H1 (cell line): ENCODE measurements at regions of chr10 and their contacts with region 1.

Region 1: DNA sequence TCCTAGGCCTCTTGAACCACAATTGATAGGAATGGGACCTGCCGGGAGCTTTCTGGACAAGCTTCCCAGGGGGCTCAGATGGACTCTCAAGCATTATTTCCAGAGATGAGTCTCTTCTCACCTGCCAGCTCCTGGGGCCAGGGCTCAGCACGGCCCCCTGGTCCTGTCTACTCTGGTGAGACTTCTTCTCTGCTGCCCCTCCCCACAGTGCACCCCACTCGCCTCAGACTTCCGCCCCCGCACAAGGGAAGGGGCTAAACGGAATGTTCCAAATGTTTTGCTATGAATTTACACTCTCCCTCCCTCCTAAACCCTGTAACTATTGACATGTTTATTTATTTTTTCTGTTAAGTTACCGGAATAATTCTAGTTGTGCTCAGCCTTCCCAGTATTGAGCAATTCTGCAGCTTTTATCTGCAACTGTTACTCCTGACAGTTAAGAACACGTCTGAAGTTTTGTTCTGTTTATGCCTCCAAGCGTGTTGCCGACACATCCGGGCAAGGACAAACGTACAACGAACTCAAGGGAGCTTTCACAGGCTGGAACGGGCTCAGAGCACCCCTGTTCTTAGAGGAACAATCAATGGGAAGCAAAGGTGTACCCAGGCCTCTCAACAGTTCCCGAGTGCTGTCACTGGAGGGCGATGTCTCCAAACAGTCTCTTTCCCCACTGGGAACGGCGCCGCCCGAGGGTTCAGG is 55.2 kb downstream of the FHIP2A start:
- DNase-seq: peak; percentile 71 to 87
- H3K4me3 ChIP-seq: no peak overlapping the region
- H3K27ac ChIP-seq: no peak overlapping the region
- H3K4me1 ChIP-seq: peaks cover 4 to 14% (median 6%) of the 10 kb centered on the region in 4 experiments
- H3K27me3 ChIP-seq: no peaks in the 10 kb centered on the region
- CTCF ChIP-seq: peak; percentile 88 to 97 (median 95)
- EP300 ChIP-seq: 0 out of 3 replicates have a peak, but pooled peaks of 1 of the 2 experiments have one; percentile 9
- POLR2A ChIP-seq: no peak
- RAD21 ChIP-seq: peak; percentile 98

Region 2: GRCh38 chr10:114565066-114565465 is 311.7 kb before region 1 on chr10:
- CTCF ChIA-PET with region 1: no interaction called
- POLR2A ChIA-PET with region 1: no interaction called
- DNase-seq: no peak
- H3K4me3 ChIP-seq: no peak overlapping the region
- H3K27ac ChIP-seq: no peak overlapping the region
- H3K4me1 ChIP-seq: no peaks in the 10 kb centered on the region
- H3K27me3 ChIP-seq: no peaks in the 10 kb centered on the region
- CTCF ChIP-seq: no peak
- EP300 ChIP-seq: no peak
- POLR2A ChIP-seq: no peak
- RAD21 ChIP-seq: no peak

Region 3: DNA sequence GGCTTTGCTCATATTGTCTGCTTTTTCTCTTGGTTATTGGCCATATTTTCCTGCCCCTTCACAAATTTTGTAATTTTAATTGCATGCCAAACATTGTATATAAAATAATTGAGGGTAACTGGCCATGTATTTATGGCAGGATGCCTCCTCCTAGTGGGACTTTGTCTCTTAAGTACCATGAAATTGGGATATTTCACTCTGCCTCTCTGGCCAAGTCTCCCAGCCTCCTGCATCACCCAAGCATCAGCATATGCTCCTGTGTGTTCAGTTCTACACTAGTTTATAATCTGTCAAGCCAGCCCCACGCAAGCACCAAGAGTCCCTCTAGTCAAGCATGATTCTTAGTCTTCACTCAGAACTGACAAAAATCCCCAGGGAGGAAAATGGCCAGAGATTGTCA is 99.3 kb before region 1 on chr10:
- CTCF ChIA-PET with region 1: no interaction called
- POLR2A ChIA-PET with region 1: no interaction called
- DNase-seq: no peak
- H3K4me3 ChIP-seq: no peak overlapping the region
- H3K27ac ChIP-seq: no peak overlapping the region
- H3K4me1 ChIP-seq: no peaks in the 10 kb centered on the region
- H3K27me3 ChIP-seq: no peaks in the 10 kb centered on the region
- CTCF ChIP-seq: no peak
- EP300 ChIP-seq: no peak
- POLR2A ChIP-seq: no peak
- RAD21 ChIP-seq: no peak

Region 4: GRCh38 chr10:114908896-114909295 is 32.1 kb after region 1 on chr10:
- CTCF ChIA-PET with region 1: interaction called, 23 read pairs
- POLR2A ChIA-PET with region 1: no interaction called
- DNase-seq: no peak
- H3K4me3 ChIP-seq: no peak overlapping the region
- H3K27ac ChIP-seq: no peak overlapping the region
- H3K4me1 ChIP-seq: peaks cover 0 to 3% (median 0%) of the 10 kb centered on the region in 4 experiments; a peak in 2 of 7 replicates
- H3K27me3 ChIP-seq: no peaks in the 10 kb centered on the region
- CTCF ChIP-seq: no peak
- EP300 ChIP-seq: no peak
- POLR2A ChIP-seq: no peak
- RAD21 ChIP-seq: no peak

Region 5: DNA sequence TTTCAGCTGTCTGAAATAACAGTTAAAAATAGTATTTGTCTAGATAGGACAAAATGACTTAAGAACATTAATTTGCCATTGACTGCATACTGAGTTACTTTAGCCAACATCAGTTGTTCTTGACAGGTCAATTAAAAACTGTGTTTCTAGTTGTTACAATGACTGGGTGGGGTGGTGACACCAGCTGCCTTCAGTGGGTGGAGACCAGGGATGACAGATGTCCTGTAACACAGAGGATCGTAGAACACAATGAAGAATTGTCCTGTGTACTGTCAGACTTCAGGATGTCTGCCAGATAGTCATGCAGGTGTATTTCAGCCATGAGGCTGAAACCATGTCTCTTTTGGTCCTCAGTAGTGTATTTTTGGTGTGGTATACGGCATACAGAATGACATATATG is 85.7 kb after region 1 on chr10:
- CTCF ChIA-PET with region 1: interaction called, 15 read pairs
- POLR2A ChIA-PET with region 1: no interaction called
- DNase-seq: no peak
- H3K4me3 ChIP-seq: no peak overlapping the region
- H3K27ac ChIP-seq: no peak overlapping the region
- H3K4me1 ChIP-seq: no peaks in the 10 kb centered on the region
- H3K27me3 ChIP-seq: no peaks in the 10 kb centered on the region
- CTCF ChIP-seq: no peak
- EP300 ChIP-seq: no peak
- POLR2A ChIP-seq: no peak
- RAD21 ChIP-seq: no peak

Region 6: GRCh38 chr10:115020449-115020848 is 143.7 kb after region 1 on chr10:
- CTCF ChIA-PET with region 1: interaction called, 20 read pairs
- POLR2A ChIA-PET with region 1: no interaction called
- DNase-seq: peak in 1 of 2 experiments; percentile 14
- H3K4me3 ChIP-seq: no peak overlapping the region
- H3K27ac ChIP-seq: no peak overlapping the region
- H3K4me1 ChIP-seq: peaks cover 0 to 3% (median 1%) of the 10 kb centered on the region in 4 experiments; a peak in 1 of 7 replicates
- H3K27me3 ChIP-seq: no peaks in the 10 kb centered on the region
- CTCF ChIP-seq: no peak
- EP300 ChIP-seq: no peak
- POLR2A ChIP-seq: no peak
- RAD21 ChIP-seq: no peak

Region 7: GRCh38 chr10:115093286-115093775 is 216.6 kb after region 1 on chr10 and contains the start of gene ATRNL1:
- CTCF ChIA-PET with region 1: interaction called, 19 read pairs
- POLR2A ChIA-PET with region 1: no interaction called
- DNase-seq: peak in 1 of 2 experiments; percentile 82
- H3K4me3 ChIP-seq: peak within 1 kb of the TSS; percentile 70 to 95 (median 78)
- H3K27ac ChIP-seq: peak within 1 kb of the TSS; percentile 58; the same call in 1 of the 2 replicates
- H3K4me1 ChIP-seq: peaks cover 0 to 8% (median under 1%) of the 10 kb centered on the region in 4 experiments; a peak in 3 of 7 replicates
- H3K27me3 ChIP-seq: peaks cover 0 to 20% (median 10%) of the 10 kb centered on the region in 4 experiments; a peak in 4 of 7 replicates
- CTCF ChIP-seq: no peak
- EP300 ChIP-seq: no peak
- POLR2A ChIP-seq: 0 out of 3 replicates have a peak, but pooled peaks of 1 of the 2 experiments have one; percentile 22
- RAD21 ChIP-seq: no peak
- total RNA-seq, gene ATRNL1: 17.6 and 18.4 TPM in 2 replicates